ENCODE measurements at regions of chr1 and their contacts with region 1.

Region 1: DNA sequence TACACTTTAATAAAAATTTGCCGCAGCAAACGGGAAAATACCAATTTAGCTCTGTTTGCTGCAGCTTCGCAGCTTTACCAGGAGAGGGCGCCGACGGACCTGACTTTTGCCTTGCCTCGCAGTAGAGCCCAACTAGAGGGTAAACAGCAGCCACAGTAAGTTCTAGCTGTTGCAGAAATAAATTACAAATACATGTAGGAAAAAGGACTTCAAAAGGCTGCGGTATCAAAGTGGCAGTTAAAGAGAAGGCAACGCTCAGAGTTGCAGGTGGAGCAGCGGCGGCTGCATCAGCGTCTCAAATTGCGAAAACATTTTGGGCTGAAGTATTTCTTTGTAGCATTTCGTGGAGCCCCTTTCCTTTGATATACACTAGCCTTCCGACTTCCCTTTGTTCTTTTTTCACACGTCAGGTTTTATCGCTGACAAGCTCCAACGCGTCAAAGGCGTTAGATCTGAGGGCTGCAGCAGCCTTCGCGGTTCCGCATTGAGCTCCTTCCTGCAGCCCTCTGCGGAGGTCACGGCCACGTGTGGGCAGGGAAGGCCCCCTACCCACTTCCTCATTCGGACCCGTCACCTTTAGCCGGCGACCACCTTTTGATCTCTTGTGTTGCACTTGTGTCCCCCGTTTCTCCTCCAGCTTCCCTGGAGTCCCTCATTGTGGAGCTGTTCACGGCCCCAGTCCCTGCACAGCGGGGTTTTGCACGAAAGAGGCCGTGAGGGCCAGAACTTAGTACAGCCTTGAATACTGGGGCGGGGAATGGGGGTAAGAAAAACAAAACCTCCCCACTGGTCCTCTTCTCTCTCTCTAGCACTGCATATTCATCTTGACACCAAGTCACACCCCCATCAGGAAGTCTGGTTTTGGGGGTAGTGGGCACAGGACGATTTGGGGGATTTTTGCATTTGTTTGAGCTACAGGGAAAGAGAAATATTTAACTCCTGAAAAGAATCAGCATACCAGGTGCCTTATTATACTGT is 72.8 kb downstream of the S1PR1 start:
- DNase-seq: peak; percentile 56
- H3K27ac ChIP-seq: no peak overlapping the region
- CTCF ChIP-seq: peak; percentile 89

Region 2: GRCh38 chr1:101298663-101299062 is 11.0 kb before region 1 on chr1:
- CTCF ChIA-PET with region 1: interaction called, 14 read pairs
- POLR2A ChIA-PET with region 1: no interaction called
- DNase-seq: no peak
- H3K27ac ChIP-seq: no peak overlapping the region
- CTCF ChIP-seq: no peak

Region 3: DNA sequence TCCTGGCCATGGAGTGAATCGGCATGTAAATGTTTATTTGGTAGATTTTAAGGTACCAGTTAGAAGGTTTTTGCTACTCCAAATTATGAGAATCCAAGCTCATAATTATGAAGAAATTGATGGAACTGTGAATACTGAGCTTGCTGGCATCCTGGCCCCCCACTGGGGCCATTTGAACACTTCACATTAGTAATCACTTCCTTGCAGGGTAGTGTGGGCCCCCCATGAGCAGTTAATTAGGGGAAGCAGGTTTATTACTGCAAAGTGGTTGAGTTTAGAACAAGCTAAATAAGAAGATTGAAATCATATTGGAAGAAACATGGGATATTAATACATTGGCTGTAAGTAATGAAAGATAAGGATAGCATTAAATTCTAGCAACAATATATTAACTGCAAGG is 13.9 kb after region 1 on chr1:
- CTCF ChIA-PET with region 1: interaction called, 10 read pairs
- POLR2A ChIA-PET with region 1: no interaction called
- DNase-seq: no peak
- H3K27ac ChIP-seq: no peak overlapping the region
- CTCF ChIP-seq: no peak

Region 4: GRCh38 chr1:101357444-101357986 is 47.9 kb after region 1 on chr1:
- CTCF ChIA-PET with region 1: interaction called, 21 read pairs
- POLR2A ChIA-PET with region 1: interaction called, 8 read pairs
- DNase-seq: peak; percentile 84
- H3K27ac ChIP-seq: no peak overlapping the region
- CTCF ChIP-seq: peak; percentile 84